Left lung (tissue), 14 donors: ENCODE measurements at regions of chr1 and their contacts with region 1.

Region 1: GRCh38 chr1:155063550-155064110 is at the start of gene EFNA4:
- DNase-seq: peak; percentile 86 to 94 (median 91)
- ATAC-seq: peak; percentile 95
- H3K4me3 ChIP-seq: peak within 1 kb of the TSS; percentile 73 to 84
- H3K27ac ChIP-seq: peak within 1 kb of the TSS; percentile 63 to 88
- H3K4me1 ChIP-seq: peaks cover 12 to 43% of the 10 kb centered on the region in 2 donors
- H3K27me3 ChIP-seq: no peaks in the 10 kb centered on the region
- CTCF ChIP-seq: no peak
- polyA plus RNA-seq, gene EFNA4: 19.1 to 23.1 (median 22.6) TPM

Region 2: DNA sequence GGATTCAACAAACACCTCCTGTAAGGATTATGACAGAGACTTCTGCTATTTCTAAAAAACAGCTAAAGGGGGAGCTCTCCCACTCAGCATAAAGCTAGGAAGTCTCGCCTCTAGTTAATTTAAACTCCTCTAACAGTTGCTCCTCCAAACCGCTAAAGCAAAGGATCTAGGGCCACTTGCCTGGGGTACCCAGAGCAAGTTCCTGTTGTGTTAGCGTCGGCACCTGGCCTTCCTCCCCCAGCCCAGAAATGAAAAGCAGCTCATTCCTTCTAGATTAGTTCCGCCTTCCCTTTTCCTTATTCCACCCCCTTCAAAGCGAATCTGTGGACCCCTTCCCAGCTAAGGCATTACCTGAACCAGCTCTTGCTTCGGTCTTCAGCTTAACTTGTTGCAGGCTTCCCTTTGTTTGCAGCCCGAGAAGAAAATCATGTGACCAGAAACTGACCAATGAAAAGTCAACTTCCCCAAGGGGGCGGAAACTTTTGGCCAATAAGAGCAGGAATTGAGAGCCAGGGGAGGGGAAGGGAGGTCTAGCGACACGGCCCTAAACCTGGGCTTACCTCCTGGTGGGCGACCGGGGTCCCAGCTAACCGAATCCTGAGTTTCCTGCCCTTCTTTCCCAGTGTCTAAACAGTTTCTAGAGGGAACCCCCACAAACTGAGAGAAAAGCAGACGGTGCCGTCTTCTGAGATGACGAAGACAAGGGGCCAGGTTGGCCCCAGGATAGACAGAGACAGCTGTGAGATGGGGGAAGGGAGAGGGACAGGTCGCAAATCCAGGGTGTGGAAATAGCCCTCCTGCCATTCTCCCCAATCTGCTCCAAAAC is 107.7 kb before region 1 on chr1 and contains the start of gene PBXIP1:
- intact Hi-C with region 1: loop called in 1 of 2 experiments (anchors 10 kb)
- DNase-seq: peak in 3 of 4 donors; percentile 75 to 93 (median 91)
- ATAC-seq: peak; percentile 87
- H3K4me3 ChIP-seq: peak within 1 kb of the TSS; percentile 50 to 58
- H3K27ac ChIP-seq: peak within 1 kb of the TSS; percentile 81 to 88
- H3K4me1 ChIP-seq: peaks cover 29 to 74% of the 10 kb centered on the region in 2 donors
- H3K27me3 ChIP-seq: no peaks in the 10 kb centered on the region
- CTCF ChIP-seq: no peak
- polyA plus RNA-seq, gene PBXIP1: 72.8 to 84.4 (median 79.1) TPM